Activated CD4-positive, alpha-beta memory T cell treated with anti-CD3 and anti-CD28 coated beads for 36 hours (primary cell): ENCODE measurements at regions of chr11 and their contacts with region 1.

Region 1: GRCh38 chr11:72030472-72031045 is 31.9 kb downstream of the IL18BP start:
- DNase-seq: no peak
- H3K4me3 Mint-ChIP-seq: no peak overlapping the region
- H3K27ac Mint-ChIP-seq: peak overlapping the region; percentile 38
- H3K4me1 Mint-ChIP-seq: peaks cover 27% of the 10 kb centered on the region
- H3K27me3 Mint-ChIP-seq: no peaks in the 10 kb centered on the region

Region 2: GRCh38 chr11:71568435-71569349 is 461.9 kb before region 1 on chr11:
- CTCF ChIA-PET with region 1: no interaction called
- POLR2A ChIA-PET with region 1: no interaction called
- intact Hi-C with region 1: no loop called
- DNase-seq: no peak
- H3K4me3 Mint-ChIP-seq: no peak overlapping the region
- H3K27ac Mint-ChIP-seq: no peak overlapping the region
- H3K4me1 Mint-ChIP-seq: no peaks in the 10 kb centered on the region
- H3K27me3 Mint-ChIP-seq: peaks cover 23% of the 10 kb centered on the region

Region 3: DNA sequence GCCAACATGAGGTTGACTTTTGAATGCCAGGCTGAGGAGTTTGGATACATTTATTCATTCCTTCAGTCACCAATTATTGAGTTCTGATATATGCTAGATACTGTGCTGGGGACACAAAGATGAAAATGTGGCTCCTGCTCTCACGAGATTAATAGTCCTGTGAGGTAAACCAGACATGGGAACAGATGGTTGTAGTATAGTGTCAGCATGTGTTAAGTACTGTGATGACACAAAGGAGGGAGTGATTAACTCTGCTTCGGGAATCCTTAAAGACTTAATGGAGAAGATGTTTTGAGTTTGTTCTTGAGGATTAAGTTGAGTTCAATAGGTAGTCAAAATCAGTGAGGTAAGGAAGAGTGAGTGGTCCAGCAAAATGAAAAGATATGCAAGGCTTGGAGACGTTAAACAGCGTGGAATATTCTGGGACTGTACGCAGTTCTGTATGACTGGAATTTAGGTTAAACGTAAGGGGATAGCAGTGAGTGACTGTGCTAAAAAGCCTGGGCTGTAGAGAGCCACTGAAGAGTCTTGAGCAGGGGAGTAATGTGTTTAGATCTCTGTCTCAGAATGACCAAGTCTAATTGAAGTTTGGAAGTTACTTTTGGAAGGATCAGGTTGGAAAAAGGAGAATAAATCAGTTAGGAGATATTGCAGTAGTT is 89.9 kb before region 1 on chr11:
- CTCF ChIA-PET with region 1: no interaction called
- POLR2A ChIA-PET with region 1: no interaction called
- intact Hi-C with region 1: no loop called
- DNase-seq: no peak
- H3K4me3 Mint-ChIP-seq: no peak overlapping the region
- H3K27ac Mint-ChIP-seq: no peak overlapping the region
- H3K4me1 Mint-ChIP-seq: peaks cover 14% of the 10 kb centered on the region
- H3K27me3 Mint-ChIP-seq: no peaks in the 10 kb centered on the region

Region 4: GRCh38 chr11:72040726-72041441 is 10.3 kb after region 1 on chr11:
- CTCF ChIA-PET with region 1: interaction called, 57 read pairs
- POLR2A ChIA-PET with region 1: interaction called, 7 read pairs
- intact Hi-C with region 1: no loop called
- DNase-seq: peak; percentile 83
- H3K4me3 Mint-ChIP-seq: no peak overlapping the region
- H3K27ac Mint-ChIP-seq: no peak overlapping the region
- H3K4me1 Mint-ChIP-seq: peaks cover 34% of the 10 kb centered on the region
- H3K27me3 Mint-ChIP-seq: no peaks in the 10 kb centered on the region

Region 5: DNA sequence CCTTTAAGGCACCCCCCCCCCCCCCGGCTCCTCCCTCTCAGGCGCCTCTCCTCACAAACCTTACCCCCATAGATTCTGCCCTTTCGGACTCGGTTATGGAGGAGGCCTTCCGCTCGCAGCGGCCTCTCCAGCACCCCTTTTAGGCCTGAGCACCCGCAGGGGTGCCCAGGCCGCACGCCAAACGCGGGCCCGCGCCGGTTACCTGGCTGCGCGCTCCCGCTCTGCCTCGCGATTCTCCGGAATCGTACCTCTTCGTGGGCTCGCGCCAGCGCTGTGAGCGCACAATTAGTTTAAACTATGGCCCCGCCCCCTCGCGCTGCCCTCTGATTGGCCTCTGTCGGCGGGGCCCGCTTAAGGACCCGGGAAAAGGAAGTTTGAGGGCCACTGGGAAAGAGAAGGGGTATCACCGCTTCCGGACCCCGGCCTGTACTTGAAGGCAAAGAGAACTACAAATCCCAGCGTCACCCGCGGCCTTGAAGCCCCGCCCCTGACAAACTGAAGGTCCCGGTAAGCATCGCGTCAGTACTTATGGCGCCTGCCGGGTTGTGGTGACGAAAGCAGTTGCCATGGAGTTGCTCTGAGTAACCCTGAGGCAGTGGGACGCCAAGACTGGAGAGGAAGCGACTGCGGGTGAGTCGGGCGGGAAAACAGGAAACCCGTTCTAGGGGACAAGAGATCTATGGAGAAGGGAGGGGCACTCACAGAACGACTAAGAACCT is 49.9 kb after region 1 on chr11 and contains the starts of genes LRRC51 and NUMA1:
- CTCF ChIA-PET with region 1: interaction called, 40 read pairs
- POLR2A ChIA-PET with region 1: no interaction called
- intact Hi-C with region 1: no loop called
- DNase-seq: peak; percentile 100
- H3K4me3 Mint-ChIP-seq: peak within 1 kb of the TSS; percentile 92
- H3K27ac Mint-ChIP-seq: peak within 1 kb of the TSS; percentile 96
- H3K4me1 Mint-ChIP-seq: peaks cover 31% of the 10 kb centered on the region
- H3K27me3 Mint-ChIP-seq: no peaks in the 10 kb centered on the region
- total RNA-seq, gene LRRC51: 8.3 to 8.5 TPM
- total RNA-seq, gene NUMA1: 149 to 158 TPM

Region 6: DNA sequence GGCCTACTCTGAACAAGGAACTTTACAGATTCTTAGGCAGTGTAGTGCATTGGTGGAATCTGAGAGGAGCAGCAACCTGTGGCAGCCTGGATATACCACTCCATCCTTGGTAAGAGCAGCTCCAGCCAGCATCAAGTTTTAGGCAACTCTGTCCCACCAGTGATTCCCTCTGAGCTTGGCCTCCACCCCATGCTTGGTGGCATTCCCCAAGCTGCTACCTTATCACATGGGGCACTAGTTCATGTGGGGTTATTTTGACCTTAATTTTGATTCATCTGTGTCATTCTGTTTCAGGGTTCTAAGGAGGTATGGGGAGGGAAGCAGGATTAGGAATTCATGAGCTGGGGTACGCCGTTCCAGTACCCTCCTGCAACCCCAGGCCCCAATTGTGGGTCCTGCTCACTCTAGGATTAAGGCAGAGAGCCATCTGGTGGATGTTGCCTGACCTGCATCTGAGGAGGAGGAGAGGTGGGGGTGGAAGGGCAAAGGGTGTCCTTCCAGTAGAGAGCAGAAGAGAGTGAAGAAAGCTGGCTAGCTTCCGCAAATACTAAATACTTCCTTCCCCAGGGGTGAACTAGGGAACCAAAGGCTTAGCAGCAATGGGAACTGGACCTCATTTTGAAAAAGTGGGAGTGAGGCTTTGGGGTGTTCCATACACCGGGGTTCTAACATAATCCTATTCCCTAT is 60.6 kb after region 1 on chr11:
- CTCF ChIA-PET with region 1: interaction called, 179 read pairs
- POLR2A ChIA-PET with region 1: no interaction called
- intact Hi-C with region 1: loop called (anchors 1 kb)
- DNase-seq: peak; percentile 76
- H3K4me3 Mint-ChIP-seq: no peak overlapping the region
- H3K27ac Mint-ChIP-seq: no peak overlapping the region
- H3K4me1 Mint-ChIP-seq: peaks cover 11% of the 10 kb centered on the region
- H3K27me3 Mint-ChIP-seq: no peaks in the 10 kb centered on the region

Region 7: GRCh38 chr11:72238040-72238450 is 207.5 kb after region 1 on chr11:
- CTCF ChIA-PET with region 1: interaction called, 20 read pairs
- POLR2A ChIA-PET with region 1: no interaction called
- intact Hi-C with region 1: no loop called
- DNase-seq: peak; percentile 72
- H3K4me3 Mint-ChIP-seq: no peak overlapping the region
- H3K27ac Mint-ChIP-seq: no peak overlapping the region
- H3K4me1 Mint-ChIP-seq: peaks cover 12% of the 10 kb centered on the region
- H3K27me3 Mint-ChIP-seq: peaks cover 33% of the 10 kb centered on the region

Region 8: GRCh38 chr11:72278911-72279310 is 248.4 kb after region 1 on chr11:
- CTCF ChIA-PET with region 1: no interaction called
- POLR2A ChIA-PET with region 1: no interaction called
- intact Hi-C with region 1: no loop called
- DNase-seq: no peak
- H3K4me3 Mint-ChIP-seq: no peak overlapping the region
- H3K27ac Mint-ChIP-seq: no peak overlapping the region
- H3K4me1 Mint-ChIP-seq: no peaks in the 10 kb centered on the region
- H3K27me3 Mint-ChIP-seq: peaks cover 16% of the 10 kb centered on the region

Region 9: GRCh38 chr11:72553706-72554105 is 523.1 kb after region 1 on chr11:
- CTCF ChIA-PET with region 1: no interaction called
- POLR2A ChIA-PET with region 1: no interaction called
- intact Hi-C with region 1: no loop called
- DNase-seq: peak; percentile 58
- H3K4me3 Mint-ChIP-seq: no peak overlapping the region
- H3K27ac Mint-ChIP-seq: no peak overlapping the region
- H3K4me1 Mint-ChIP-seq: peaks cover 7% of the 10 kb centered on the region
- H3K27me3 Mint-ChIP-seq: peaks cover 5% of the 10 kb centered on the region